Posterior vena cava (tissue), 2 donors: ENCODE measurements at regions of chr7 and their contacts with region 1.

Region 1: GRCh38 chr7:44307301-44307900 is 18.0 kb downstream of the CAMK2B start:
- DNase-seq: peak; percentile 42

Region 2: DNA sequence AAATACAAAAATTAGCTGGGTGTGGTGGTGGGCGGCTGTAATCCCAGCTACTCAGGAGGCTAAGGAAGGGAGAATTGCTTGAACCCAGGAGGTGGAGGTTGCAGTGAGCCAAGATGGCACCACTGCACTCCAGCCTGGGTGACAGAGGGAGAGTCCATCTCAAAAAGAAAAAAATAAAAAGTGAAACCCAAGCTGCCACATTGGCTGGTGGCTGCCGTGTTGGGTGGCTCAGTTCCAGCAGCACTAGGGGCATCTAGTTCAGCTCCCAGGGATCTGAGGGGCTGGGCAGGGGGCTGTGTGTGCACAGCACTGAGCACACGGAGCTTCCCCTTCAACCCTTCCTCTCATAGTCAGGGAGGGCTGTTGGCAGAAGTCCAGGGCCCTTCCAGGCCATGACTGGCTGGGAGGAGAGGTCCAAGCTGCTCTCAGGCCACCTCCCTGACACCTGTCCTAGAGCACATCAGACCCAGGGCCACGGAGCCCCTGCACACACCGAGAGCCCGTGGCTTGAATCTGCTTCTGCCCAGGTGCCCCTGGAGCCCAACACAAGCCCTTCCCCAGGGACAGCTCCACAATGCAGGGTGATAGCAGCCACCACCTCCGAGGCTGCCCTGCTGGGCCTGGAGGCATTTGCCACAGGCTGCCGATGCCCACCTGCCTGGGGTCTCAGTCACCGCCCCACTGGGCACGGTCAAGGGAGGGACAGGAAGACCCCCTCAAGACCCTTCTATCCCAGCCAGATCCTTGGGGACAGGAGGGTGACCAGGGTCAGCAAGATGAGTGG is 59.3 kb before region 1 on chr7:
- intact Hi-C with region 1: loop called in 1 of 2 experiments (anchors 5 kb)
- DNase-seq: no peak

Region 3: GRCh38 chr7:44477063-44477830 is 169.8 kb after region 1 on chr7:
- intact Hi-C with region 1: no loop called
- DNase-seq: no peak

Region 4: GRCh38 chr7:45985902-45986301 is 1678.5 kb after region 1 on chr7:
- intact Hi-C with region 1: no loop called
- DNase-seq: no peak